Panc1 (cell line): ENCODE measurements at regions of chr7 and their contacts with region 1.

Region 1: GRCh38 chr7:12322284-12322902 is 81.3 kb downstream of the VWDE start:
- DNase-seq: peak; percentile 41
- ATAC-seq: peak; percentile 65; the same call in 1 of the 2 replicates
- H3K4me3 ChIP-seq: no peak overlapping the region
- H3K27ac ChIP-seq: peak overlapping the region; percentile 80
- H3K4me1 ChIP-seq: peaks cover 12% of the 10 kb centered on the region; the same call in 1 of the 2 replicates
- H3K27me3 ChIP-seq: no peaks in the 10 kb centered on the region
- CTCF ChIP-seq: peak; percentile 88

Region 2: GRCh38 chr7:11427686-11428273 is 894.6 kb before region 1 on chr7:
- CTCF ChIA-PET with region 1: no interaction called
- POLR2A ChIA-PET with region 1: no interaction called
- in situ Hi-C with region 1: no loop called
- intact Hi-C with region 1: loop called (anchors 2 kb)
- DNase-seq: peak; percentile 59
- ATAC-seq: peak; percentile 92
- H3K4me3 ChIP-seq: no peak overlapping the region
- H3K27ac ChIP-seq: peak overlapping the region; percentile 44; the same call in 1 of the 2 replicates
- H3K4me1 ChIP-seq: peaks cover 11% of the 10 kb centered on the region; the same call in 1 of the 2 replicates
- H3K27me3 ChIP-seq: no peaks in the 10 kb centered on the region
- CTCF ChIP-seq: peak; percentile 82; the same call in 1 of the 2 replicates

Region 3: GRCh38 chr7:12067141-12067831 is 255.1 kb before region 1 on chr7:
- CTCF ChIA-PET with region 1: no interaction called
- POLR2A ChIA-PET with region 1: no interaction called
- in situ Hi-C with region 1: no loop called
- intact Hi-C with region 1: loop called (anchors 2 kb)
- DNase-seq: no peak
- ATAC-seq: peak; percentile 70; the same call in 1 of the 2 replicates
- H3K4me3 ChIP-seq: no peak overlapping the region
- H3K27ac ChIP-seq: peak overlapping the region; percentile 60; the same call in 1 of the 2 replicates
- H3K4me1 ChIP-seq: peaks cover 10% of the 10 kb centered on the region
- H3K27me3 ChIP-seq: no peaks in the 10 kb centered on the region
- CTCF ChIP-seq: peak; percentile 76

Region 4: GRCh38 chr7:12111422-12112405 is 210.7 kb before region 1 on chr7:
- CTCF ChIA-PET with region 1: no interaction called
- POLR2A ChIA-PET with region 1: no interaction called
- in situ Hi-C with region 1: no loop called
- intact Hi-C with region 1: loop called (anchors 5 kb)
- DNase-seq: peak; percentile 67
- ATAC-seq: peak; percentile 93
- H3K4me3 ChIP-seq: peak overlapping the region; percentile 57 to 63
- H3K27ac ChIP-seq: peak overlapping the region; percentile 97
- H3K4me1 ChIP-seq: peaks cover 47% of the 10 kb centered on the region
- H3K27me3 ChIP-seq: no peaks in the 10 kb centered on the region
- CTCF ChIP-seq: peak; percentile 75

Region 5: GRCh38 chr7:12211054-12211710 is 111.2 kb before region 1 on chr7 and contains the start of gene TMEM106B:
- CTCF ChIA-PET with region 1: no interaction called
- POLR2A ChIA-PET with region 1: no interaction called
- in situ Hi-C with region 1: no loop called
- intact Hi-C with region 1: loop called (anchors 5 kb)
- DNase-seq: peak; percentile 96
- ATAC-seq: peak; percentile 94
- H3K4me3 ChIP-seq: peak within 1 kb of the TSS; percentile 83 to 90
- H3K27ac ChIP-seq: peak within 1 kb of the TSS; percentile 100
- H3K4me1 ChIP-seq: peaks cover 58% of the 10 kb centered on the region
- H3K27me3 ChIP-seq: no peaks in the 10 kb centered on the region
- CTCF ChIP-seq: no peak; the same call in 1 of the 2 replicates
- total RNA-seq, gene TMEM106B: 89.0 TPM